Activated CD8-positive, alpha-beta T cell treated with anti-CD3 and anti-CD28 coated beads for 36 hours (primary cell): ENCODE measurements at regions of chr1 and their contacts with region 1.

Region 1: DNA sequence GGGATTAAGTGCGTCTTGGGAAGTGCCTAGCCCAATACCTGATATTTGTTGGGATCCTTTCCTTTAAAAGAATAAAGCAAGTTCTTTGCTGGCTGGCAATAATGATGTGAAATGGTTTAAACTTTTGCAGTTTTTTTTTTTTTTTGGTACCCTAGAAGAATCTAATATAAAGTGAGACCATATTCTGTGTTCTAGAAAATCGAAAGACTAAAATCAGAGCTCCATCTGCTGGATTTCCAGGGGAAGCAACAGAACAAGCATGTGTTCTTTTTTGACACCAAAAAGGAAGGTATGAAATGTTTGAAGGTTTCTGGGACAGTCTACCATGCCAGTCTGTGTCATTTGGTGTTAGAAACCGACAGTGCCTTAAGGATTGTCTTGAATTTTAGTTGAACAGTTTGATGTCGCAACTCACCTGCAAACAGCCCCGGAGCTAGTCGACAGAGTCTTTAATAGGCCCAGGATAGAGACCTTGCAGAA is 6.4 kb downstream of the UTP11 start:
- DNase-seq: no peak
- ATAC-seq: peak; percentile 79
- H3K4me3 Mint-ChIP-seq: no peak overlapping the region
- H3K27ac Mint-ChIP-seq: no peak overlapping the region
- H3K4me1 Mint-ChIP-seq: peaks cover 29% of the 10 kb centered on the region
- H3K27me3 Mint-ChIP-seq: no peaks in the 10 kb centered on the region
- CTCF ChIP-seq: peak; percentile 41

Region 2: GRCh38 chr1:37634244-37634991 is 384.5 kb before region 1 on chr1 and contains the start of gene RSPO1:
- CTCF ChIA-PET with region 1: no interaction called
- POLR2A ChIA-PET with region 1: no interaction called
- intact Hi-C with region 1: no loop called
- DNase-seq: no peak
- ATAC-seq: peak; percentile 53
- H3K4me3 Mint-ChIP-seq: no peak within 1 kb of the TSS
- H3K27ac Mint-ChIP-seq: no peak within 1 kb of the TSS
- H3K4me1 Mint-ChIP-seq: peaks cover 3% of the 10 kb centered on the region
- H3K27me3 Mint-ChIP-seq: peaks cover 77% of the 10 kb centered on the region
- CTCF ChIP-seq: no peak
- total RNA-seq, gene RSPO1: not detected

Region 3: GRCh38 chr1:37999430-38000232 is 19.3 kb before region 1 on chr1:
- CTCF ChIA-PET with region 1: interaction called, 99 read pairs
- POLR2A ChIA-PET with region 1: interaction called, 114 read pairs
- intact Hi-C with region 1: no loop called
- DNase-seq: peak; percentile 39
- ATAC-seq: peak; percentile 17
- H3K4me3 Mint-ChIP-seq: peak overlapping the region; percentile 60
- H3K27ac Mint-ChIP-seq: peak overlapping the region; percentile 92
- H3K4me1 Mint-ChIP-seq: peaks cover 67% of the 10 kb centered on the region
- H3K27me3 Mint-ChIP-seq: no peaks in the 10 kb centered on the region
- CTCF ChIP-seq: no peak

Region 4: DNA sequence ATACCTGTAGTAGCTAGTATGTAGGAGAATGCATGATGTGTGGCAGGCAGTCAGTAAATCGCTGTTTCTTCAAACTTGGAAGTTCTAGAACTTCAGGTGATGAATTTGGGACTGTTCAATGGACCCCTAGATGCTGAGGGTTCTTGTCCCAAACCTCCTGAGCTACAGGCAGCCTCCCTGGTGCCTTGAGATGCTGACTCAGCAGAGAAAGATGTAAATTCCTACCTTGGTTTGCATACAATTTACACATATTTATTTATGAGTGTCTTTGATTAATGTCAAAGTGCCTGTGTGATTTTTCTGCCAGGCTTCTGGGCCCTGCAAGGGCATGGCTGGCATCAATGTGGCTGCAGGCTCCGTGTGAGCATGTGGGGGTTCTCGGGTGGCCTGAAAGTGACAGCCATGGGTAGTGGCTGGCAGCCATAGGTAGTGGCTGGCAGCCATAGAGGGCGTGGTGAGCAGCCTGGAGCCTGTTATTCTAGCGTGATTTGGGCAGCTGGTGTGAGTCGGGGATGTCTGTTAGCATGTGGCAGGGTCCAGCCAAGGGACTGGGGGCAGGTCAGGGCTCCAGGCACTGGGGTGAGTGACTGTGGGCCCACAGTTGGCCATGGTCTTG is 40.8 kb after region 1 on chr1:
- CTCF ChIA-PET with region 1: no interaction called
- POLR2A ChIA-PET with region 1: no interaction called
- intact Hi-C with region 1: no loop called
- DNase-seq: no peak
- ATAC-seq: no peak
- H3K4me3 Mint-ChIP-seq: no peak overlapping the region
- H3K27ac Mint-ChIP-seq: no peak overlapping the region
- H3K4me1 Mint-ChIP-seq: peaks cover 6% of the 10 kb centered on the region
- H3K27me3 Mint-ChIP-seq: peaks cover 15% of the 10 kb centered on the region
- CTCF ChIP-seq: no peak